Activated CD4-positive, alpha-beta memory T cell treated with anti-CD3 and anti-CD28 coated beads, Interleukin-2, amount 10 ng/mL, durations not matched to agents 7 days and 5 days (primary cell): ENCODE measurements at regions of chr5 and their contacts with region 1.

Region 1: DNA sequence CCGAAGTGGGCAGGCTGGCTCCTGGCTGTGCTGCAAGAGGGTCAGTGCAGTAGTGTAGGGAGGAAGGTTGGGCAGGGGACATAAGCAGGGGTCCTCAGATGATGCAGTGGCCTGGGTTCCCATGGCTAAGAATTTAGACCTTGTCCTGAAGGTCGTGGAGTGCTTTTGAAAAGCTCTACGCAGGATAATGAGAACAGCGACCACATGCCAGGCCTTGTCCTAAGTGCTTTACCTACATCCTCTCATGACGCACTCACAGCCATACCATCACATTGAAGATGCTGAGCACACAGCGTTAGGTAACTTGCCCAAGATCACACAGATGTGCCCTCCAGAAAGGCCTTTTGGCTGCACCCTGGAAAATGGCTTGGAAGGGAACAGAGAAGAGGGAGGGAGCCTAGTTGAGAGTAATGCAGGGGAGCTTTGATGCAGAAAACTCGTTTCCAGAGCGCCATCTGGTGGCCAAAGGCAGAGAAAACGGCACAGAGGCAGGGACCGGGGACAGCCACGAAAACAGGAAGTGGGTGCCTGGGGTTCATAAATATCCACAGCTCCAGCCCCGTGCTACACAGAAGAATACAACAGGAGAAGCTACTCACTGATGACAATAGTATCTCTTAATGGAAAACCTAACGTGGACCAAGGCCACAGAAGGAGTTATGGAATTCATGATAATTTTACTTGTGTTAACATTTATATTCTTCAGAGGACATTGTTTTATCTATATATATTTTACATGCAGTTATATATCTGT is 2.6 kb upstream of the PCDH12 start:
- DNase-seq: peak; percentile 93
- H3K4me3 Mint-ChIP-seq: peak overlapping the region; percentile 46
- H3K27ac Mint-ChIP-seq: peak overlapping the region; percentile 80
- H3K4me1 Mint-ChIP-seq: peaks cover 51% of the 10 kb centered on the region
- H3K27me3 Mint-ChIP-seq: no peaks in the 10 kb centered on the region

Region 2: DNA sequence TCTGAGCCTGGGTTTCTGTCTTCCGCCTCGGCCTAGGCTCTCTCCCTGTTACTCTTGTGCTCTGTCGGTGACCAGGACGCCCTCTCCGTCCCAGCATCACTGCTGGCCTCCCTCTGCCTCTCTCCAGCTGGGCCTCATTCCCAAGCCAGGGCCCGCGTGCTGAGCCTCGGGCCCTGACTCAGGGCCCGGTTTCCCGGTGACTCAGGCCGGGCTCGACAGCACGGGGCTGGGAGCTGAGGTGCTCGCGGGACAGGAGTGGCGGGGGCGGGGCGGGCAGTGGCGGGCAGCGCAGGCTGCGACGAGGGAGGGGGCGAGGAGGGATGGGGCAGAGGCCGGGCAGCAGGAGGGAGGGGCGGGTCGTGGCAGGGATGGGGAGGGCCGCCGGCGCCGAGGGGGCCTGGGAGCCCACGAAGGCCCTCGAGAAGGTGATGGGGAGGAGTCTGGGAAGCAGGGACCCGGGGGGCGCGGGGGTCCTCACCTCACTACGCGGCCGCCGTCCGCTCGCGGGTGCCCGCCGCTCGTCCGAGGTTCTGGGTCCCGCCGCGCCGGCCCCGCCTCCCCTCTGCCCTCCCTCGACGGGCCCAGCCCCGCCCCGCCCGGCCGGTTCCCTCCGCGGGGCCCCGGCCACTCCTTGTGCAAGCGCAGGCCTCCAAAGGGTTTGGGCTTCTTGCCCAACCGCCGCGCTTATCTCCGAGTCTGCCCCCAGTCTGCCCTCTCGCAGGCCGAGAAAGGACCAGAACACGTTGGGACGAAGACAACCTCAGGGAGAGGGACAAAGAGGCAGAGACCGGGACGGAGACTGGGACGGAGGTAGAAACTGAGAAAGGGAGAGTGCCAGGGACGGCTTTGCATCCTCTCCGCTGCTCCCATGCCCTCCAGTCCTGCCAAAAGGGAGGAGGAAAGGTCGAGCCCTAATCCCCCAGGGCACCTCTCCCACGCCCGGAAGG is 278.7 kb before region 1 on chr5 and contains the start of gene ARAP3:
- CTCF ChIA-PET with region 1: interaction called, 23 read pairs
- POLR2A ChIA-PET with region 1: no interaction called
- DNase-seq: peak; percentile 54
- H3K4me3 Mint-ChIP-seq: peak within 1 kb of the TSS; percentile 79
- H3K27ac Mint-ChIP-seq: peak within 1 kb of the TSS; percentile 70
- H3K4me1 Mint-ChIP-seq: peaks cover 41% of the 10 kb centered on the region
- H3K27me3 Mint-ChIP-seq: peaks cover 5% of the 10 kb centered on the region
- total RNA-seq, gene ARAP3: 13.6 to 13.9 TPM

Region 3: DNA sequence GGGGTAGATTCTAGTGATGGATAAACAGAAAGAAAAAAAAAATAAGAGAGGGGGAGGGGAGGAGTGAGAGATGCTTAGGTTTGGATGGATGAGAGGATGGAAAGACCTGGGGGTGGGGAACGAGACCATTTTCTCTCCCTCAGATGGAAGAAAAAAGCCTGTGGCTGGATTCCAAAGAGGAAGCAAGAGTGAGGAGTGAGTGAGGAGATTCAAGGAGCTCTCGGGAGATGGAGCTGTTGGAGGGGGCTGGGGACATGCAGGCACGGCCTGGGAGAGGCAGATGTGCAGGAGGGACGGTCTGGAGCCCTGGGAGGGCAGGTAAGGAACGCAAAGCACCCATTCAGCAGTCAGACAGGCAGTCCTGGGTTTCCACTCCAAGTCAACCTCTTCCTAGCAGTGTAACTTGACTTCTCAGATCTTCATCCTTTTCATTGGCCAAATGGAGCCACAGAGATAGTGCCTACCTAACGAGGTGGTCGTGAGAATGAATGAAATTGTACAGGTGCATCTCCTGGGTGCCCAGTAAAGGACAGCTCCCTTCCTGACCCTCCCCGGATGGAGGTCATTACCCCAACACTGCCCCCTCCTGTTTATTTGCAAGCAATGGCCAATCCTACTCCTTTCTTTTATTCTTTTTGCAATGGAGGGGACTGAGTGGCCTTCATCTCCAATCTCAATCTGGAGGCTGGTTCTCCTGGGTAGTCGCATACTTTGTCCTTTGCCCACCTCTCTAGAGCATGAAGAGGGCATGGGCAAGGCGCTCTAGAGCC is 134.7 kb before region 1 on chr5:
- CTCF ChIA-PET with region 1: interaction called, 14 read pairs
- POLR2A ChIA-PET with region 1: interaction called, 5 read pairs
- DNase-seq: peak; percentile 26
- H3K4me3 Mint-ChIP-seq: no peak overlapping the region
- H3K27ac Mint-ChIP-seq: no peak overlapping the region
- H3K4me1 Mint-ChIP-seq: peaks cover 10% of the 10 kb centered on the region
- H3K27me3 Mint-ChIP-seq: peaks cover 37% of the 10 kb centered on the region

Region 4: GRCh38 chr5:141878711-141879425 is 81.8 kb before region 1 on chr5:
- CTCF ChIA-PET with region 1: interaction called, 98 read pairs
- POLR2A ChIA-PET with region 1: interaction called, 14 read pairs
- DNase-seq: peak; percentile 89
- H3K4me3 Mint-ChIP-seq: peak overlapping the region; percentile 70
- H3K27ac Mint-ChIP-seq: no peak overlapping the region
- H3K4me1 Mint-ChIP-seq: peaks cover 29% of the 10 kb centered on the region
- H3K27me3 Mint-ChIP-seq: peaks cover 84% of the 10 kb centered on the region

Region 5: GRCh38 chr5:141923448-141924352 is 36.9 kb before region 1 on chr5 and contains the start of gene DELE1:
- CTCF ChIA-PET with region 1: interaction called, 54 read pairs
- POLR2A ChIA-PET with region 1: interaction called, 49 read pairs
- DNase-seq: peak; percentile 94
- H3K4me3 Mint-ChIP-seq: peak within 1 kb of the TSS; percentile 84
- H3K27ac Mint-ChIP-seq: peak within 1 kb of the TSS; percentile 83
- H3K4me1 Mint-ChIP-seq: peaks cover 39% of the 10 kb centered on the region
- H3K27me3 Mint-ChIP-seq: no peaks in the 10 kb centered on the region
- total RNA-seq, gene DELE1: 73.4 to 80.7 TPM

Region 6: GRCh38 chr5:141976176-141976575 is 15.6 kb after region 1 on chr5:
- CTCF ChIA-PET with region 1: interaction called, 189 read pairs
- POLR2A ChIA-PET with region 1: interaction called, 3 read pairs
- DNase-seq: no peak
- H3K4me3 Mint-ChIP-seq: no peak overlapping the region
- H3K27ac Mint-ChIP-seq: no peak overlapping the region
- H3K4me1 Mint-ChIP-seq: peaks cover 21% of the 10 kb centered on the region
- H3K27me3 Mint-ChIP-seq: no peaks in the 10 kb centered on the region

Region 7: GRCh38 chr5:142012792-142013388 is 52.3 kb after region 1 on chr5 and contains the start of gene GNPDA1:
- CTCF ChIA-PET with region 1: interaction called, 26 read pairs
- POLR2A ChIA-PET with region 1: interaction called, 14 read pairs
- DNase-seq: peak; percentile 77
- H3K4me3 Mint-ChIP-seq: peak within 1 kb of the TSS; percentile 79
- H3K27ac Mint-ChIP-seq: peak within 1 kb of the TSS; percentile 94
- H3K4me1 Mint-ChIP-seq: peaks cover 64% of the 10 kb centered on the region
- H3K27me3 Mint-ChIP-seq: no peaks in the 10 kb centered on the region
- total RNA-seq, gene GNPDA1: 27.1 to 32.1 TPM

Region 8: DNA sequence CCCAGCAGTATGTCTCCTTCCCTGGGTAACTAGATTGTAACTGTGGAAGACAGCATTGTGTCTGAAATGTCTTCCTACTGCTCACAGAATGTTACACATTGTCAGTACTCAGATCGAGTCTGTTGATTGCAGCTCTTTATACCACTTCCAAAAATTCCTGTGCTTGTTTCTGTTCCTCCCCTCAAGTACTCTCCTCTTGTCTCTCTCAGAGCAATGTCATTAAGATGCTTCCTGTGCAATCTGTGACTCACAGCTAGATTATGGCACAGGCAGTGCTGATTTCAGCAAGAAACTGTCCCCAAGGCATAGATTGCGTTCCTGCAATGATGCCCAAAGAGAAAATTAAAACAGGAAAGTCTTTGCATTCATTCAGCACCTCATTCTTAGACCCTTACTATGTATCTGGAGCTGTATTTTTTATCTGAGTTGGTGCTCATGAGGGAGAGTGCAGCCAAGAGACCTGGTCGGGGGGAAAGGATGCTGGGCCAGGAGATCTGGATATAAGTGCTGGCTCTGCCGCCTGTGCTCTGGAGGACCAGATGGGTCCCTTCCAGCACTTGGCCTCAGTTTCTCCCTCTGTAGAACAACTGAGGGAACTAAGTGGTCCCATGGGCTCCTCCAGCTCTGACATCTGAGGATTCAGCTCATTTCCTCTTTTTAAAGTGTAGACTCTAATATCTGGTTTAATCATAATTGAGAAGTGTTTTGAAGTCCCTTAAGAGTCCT is 93.0 kb after region 1 on chr5:
- CTCF ChIA-PET with region 1: no interaction called
- POLR2A ChIA-PET with region 1: no interaction called
- DNase-seq: no peak
- H3K4me3 Mint-ChIP-seq: no peak overlapping the region
- H3K27ac Mint-ChIP-seq: no peak overlapping the region
- H3K4me1 Mint-ChIP-seq: peaks cover 12% of the 10 kb centered on the region
- H3K27me3 Mint-ChIP-seq: no peaks in the 10 kb centered on the region

Region 9: DNA sequence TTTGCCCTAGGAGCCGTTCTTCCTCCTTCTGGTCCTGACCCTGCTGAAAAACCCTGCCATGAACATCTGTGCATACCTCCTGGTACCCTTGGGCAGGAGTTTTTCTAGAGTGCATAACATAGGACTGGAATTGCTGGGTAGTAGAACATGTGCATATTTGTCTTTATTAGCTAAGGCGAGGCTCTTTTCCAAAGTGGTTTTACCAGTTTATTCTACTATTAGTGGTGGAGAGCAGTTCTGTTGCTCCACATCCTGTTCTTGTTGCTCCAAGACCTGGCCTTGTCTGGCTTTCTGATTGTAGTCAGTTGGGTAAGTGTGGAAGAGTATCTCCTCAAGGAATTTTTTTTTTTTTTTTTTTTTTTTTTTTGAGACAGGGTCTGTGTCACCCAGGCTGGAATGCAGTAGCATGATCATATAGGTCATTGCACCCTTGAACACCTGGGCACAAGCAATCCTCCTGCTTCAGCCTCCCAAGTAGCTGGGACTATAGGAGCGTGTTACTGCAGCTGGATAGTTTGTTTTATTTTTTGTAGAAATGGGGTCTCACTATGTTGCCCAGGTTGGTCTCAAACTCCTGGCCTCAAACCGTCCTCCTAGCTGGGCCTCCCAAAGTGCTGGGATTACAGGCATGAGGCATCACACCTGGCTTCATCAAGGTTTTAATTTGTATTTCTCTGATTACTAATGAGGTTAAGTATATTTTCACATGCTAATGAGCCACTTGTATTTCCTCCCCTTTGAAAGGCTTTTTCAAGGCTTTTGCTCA is 279.0 kb after region 1 on chr5:
- CTCF ChIA-PET with region 1: no interaction called
- POLR2A ChIA-PET with region 1: no interaction called
- DNase-seq: no peak
- H3K4me3 Mint-ChIP-seq: no peak overlapping the region
- H3K27ac Mint-ChIP-seq: no peak overlapping the region
- H3K4me1 Mint-ChIP-seq: peaks cover 5% of the 10 kb centered on the region
- H3K27me3 Mint-ChIP-seq: peaks cover 2% of the 10 kb centered on the region